ENCODE measurements at regions of chr15 and their contacts with region 1.

Region 1: DNA sequence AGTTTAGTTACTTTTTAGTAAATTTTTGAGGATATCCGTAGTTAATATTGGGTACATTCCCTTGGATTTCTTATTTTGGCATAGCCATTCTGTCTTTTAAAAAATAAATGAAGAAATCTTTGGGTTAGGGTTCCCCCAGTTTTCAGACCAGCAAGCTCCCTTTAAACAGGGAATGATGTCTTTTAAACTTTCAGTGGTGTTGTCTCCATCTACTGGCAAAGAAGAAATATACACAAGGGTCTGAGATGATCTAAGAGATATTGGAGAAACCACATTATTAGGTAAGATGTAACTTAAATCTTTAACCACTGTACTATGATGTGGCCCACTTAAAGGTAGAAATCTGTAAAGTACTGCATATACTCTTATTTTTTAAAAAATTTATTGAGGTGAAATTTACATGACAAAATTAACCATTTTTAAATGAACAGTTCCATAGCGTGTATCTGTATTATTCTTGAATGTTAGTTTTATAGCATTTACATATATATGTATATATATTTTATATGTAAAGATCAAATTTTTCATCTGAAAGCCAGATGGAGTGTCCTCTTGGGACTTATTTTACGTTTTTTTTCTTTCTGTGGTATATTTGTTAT is 35.1 kb upstream of the EIF3J start:
- ATAC-seq: peak in 4 of 8 experiments; percentile 58 to 74 (median 68)
- H3K4me3 ChIP-seq: no peak overlapping the region
- H3K27ac ChIP-seq: no peak overlapping the region
- H3K4me1 ChIP-seq: no peaks in the 10 kb centered on the region

Region 2: DNA sequence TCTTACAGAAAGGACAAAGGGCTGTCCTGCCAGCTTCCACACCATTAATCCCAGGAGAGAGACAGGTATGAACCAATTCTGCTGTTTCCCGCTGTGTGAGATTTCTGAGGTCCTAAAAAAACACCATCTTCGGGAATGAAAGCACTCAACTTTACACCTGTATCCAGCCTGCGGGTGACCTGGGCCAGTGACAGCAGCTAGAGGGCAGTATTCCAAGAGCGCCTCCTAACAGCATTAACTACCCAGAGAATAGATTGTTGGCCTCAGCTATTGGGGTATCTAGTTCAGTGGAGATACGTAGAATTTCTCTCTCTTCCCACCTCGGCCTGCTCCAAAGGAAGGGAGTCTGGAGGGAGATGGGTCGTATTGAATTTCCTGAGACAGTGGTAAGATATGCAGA is 619.9 kb before region 1 on chr15:
- in situ Hi-C with region 1: loop called in 1 of 9 experiments (anchors 25 kb)
- ATAC-seq: no peak
- H3K4me3 ChIP-seq: no peak overlapping the region
- H3K27ac ChIP-seq: no peak overlapping the region
- H3K4me1 ChIP-seq: no peaks in the 10 kb centered on the region